ENCODE measurements at regions of chr6 and their contacts with region 1.

Region 1: DNA sequence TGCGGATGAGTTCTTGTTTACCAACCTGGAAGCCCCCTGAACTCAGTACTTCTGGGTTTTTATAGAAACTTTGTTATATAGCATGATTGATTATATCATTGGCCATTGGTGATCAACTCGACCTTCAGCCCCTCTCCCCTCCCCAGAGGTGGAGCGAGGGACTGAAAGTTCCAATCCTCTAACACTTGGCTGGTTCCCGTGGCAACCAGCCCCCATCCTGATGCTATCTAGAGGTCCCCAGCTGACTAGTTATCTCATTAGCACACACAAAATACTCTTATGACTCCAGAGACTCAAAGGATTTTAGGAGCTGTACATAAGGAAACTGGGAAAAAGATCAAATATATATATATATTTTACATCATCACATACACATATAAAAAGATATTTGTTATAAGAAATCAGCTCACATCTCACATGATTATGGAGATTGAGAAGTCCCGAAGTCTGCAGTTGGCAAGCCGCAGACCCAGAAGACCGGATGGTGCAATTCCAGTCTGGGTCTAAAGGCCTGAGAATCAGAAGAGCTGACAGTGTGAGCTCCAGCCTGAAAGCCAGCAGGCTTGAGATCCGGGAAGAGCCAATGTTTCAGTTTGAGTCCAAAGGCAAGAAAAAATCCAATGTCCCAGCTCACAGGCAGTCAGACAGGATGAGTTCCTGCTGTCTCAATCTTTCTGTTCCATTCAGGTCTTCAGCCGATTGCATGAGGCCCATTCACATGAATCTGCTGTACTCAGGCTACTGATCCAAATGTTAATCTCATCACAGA is 179.3 kb upstream of the DTNBP1 start:
- DNase-seq: no peak
- ATAC-seq: no peak
- H3K4me3 ChIP-seq: no peak overlapping the region
- H3K27ac ChIP-seq: no peak overlapping the region
- H3K4me1 ChIP-seq: peaks cover 5% of the 10 kb centered on the region; the same call in 1 of the 2 replicates
- H3K27me3 ChIP-seq: no peaks in the 10 kb centered on the region
- CTCF ChIP-seq: no peak
- EP300 ChIP-seq: no peak
- POLR2A ChIP-seq: no peak
- RAD21 ChIP-seq: no peak

Region 2: DNA sequence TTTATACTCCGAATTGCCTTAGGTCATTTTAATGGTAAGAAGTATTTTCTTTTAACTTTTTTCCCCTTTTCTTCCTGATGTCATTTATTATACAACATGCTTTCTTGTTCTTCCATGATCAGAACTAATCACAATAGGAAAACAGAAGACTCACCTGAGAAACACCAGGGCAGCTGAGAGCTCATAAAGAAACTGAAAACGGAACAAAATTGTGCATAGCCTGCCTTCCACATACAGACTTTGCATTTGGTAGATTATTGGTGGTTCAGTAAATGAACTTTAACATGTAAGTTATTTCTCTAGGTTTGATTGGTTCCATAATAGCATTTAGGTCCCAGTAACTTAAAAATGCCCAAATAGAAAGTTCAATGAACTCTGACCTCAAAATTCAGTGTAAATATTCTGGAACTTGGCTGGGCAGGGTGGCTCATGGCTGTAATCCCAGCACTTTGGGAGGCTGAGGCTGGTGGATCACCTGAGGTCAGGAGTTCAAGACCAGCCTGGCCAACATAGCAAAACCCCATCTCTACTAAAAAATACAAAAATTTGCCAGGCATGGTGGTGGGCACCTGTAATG is 18.2 kb before region 1 on chr6:
- CTCF ChIA-PET with region 1: interaction called, 3 read pairs
- POLR2A ChIA-PET with region 1: interaction called, 3 read pairs
- RAD21 ChIA-PET with region 1: interaction called, 5 read pairs
- SMC1A ChIA-PET with region 1: interaction called, 33 read pairs
- in situ Hi-C with region 1: no loop called
- intact Hi-C with region 1: no loop called
- DNase-seq: peak; percentile 40
- ATAC-seq: peak; percentile 90
- H3K4me3 ChIP-seq: no peak overlapping the region
- H3K27ac ChIP-seq: no peak overlapping the region
- H3K4me1 ChIP-seq: peaks cover 9% of the 10 kb centered on the region
- H3K27me3 ChIP-seq: no peaks in the 10 kb centered on the region
- CTCF ChIP-seq: no peak
- EP300 ChIP-seq: peak in 1 of 2 experiments; percentile 33; a peak in 1 of 4 replicates
- POLR2A ChIP-seq: no peak
- RAD21 ChIP-seq: no peak

Region 3: DNA sequence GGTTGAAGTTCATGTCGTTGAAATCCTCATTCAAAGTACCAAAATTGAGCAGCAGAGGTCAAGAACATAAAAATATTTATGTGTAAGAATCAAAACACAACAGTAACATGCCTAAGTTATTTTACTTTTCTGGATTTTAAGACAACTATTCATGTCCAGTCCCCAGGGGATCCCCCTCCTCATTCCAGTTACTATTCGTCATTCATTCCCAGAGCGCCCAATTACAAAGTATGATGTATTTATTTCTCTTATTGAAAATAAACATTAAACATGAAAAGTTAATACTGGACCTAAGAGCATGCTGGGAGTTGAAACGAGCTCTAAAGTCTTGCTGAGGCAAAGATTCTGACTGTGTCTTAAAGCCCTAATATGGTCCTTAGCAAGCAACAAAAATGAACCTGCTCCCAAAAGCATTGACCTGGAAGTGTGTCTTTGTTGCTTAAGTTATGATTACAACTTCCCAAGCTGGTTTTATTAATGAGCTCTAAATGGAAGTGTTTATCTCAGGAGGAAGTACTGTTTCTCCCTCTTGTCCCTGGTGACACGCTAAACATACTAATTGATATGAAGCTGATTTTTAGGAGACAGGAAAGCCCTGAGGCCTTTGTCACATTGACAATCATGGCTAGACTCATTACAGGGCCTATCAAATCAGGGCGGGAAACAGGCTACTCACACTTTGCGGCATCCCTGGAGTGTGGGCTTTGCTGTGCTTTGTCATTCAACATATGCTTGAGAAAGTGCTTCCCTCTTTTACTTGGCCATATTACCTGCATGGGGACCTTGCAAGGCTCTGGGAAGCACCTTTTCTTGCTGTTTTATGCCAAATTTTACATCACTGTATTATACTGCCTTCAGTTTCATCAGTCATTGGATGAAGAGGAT is 12.9 kb after region 1 on chr6:
- CTCF ChIA-PET with region 1: interaction called, 5 read pairs
- POLR2A ChIA-PET with region 1: interaction called, 5 read pairs
- RAD21 ChIA-PET with region 1: interaction called, 3 read pairs
- SMC1A ChIA-PET with region 1: interaction called, 11 read pairs
- in situ Hi-C with region 1: no loop called
- intact Hi-C with region 1: no loop called
- DNase-seq: no peak
- ATAC-seq: no peak
- H3K4me3 ChIP-seq: no peak overlapping the region
- H3K27ac ChIP-seq: no peak overlapping the region
- H3K4me1 ChIP-seq: no peaks in the 10 kb centered on the region
- H3K27me3 ChIP-seq: no peaks in the 10 kb centered on the region; a peak in 1 of 4 replicates
- CTCF ChIP-seq: no peak
- EP300 ChIP-seq: no peak
- POLR2A ChIP-seq: no peak
- RAD21 ChIP-seq: no peak

Region 4: GRCh38 chr6:15879382-15880261 is 37.5 kb after region 1 on chr6:
- CTCF ChIA-PET with region 1: interaction called, 4 read pairs
- POLR2A ChIA-PET with region 1: no interaction called
- RAD21 ChIA-PET with region 1: interaction called, 8 read pairs
- SMC1A ChIA-PET with region 1: interaction called, 13 read pairs
- in situ Hi-C with region 1: no loop called
- intact Hi-C with region 1: no loop called
- DNase-seq: no peak
- ATAC-seq: peak; percentile 81
- H3K4me3 ChIP-seq: no peak overlapping the region
- H3K27ac ChIP-seq: peak overlapping the region; percentile 61
- H3K4me1 ChIP-seq: peaks cover 18% of the 10 kb centered on the region
- H3K27me3 ChIP-seq: no peaks in the 10 kb centered on the region
- CTCF ChIP-seq: no peak
- EP300 ChIP-seq: 0 out of 4 replicates have a peak, but pooled peaks of 1 of the 2 experiments have one; percentile 25
- POLR2A ChIP-seq: no peak
- RAD21 ChIP-seq: no peak

Region 5: DNA sequence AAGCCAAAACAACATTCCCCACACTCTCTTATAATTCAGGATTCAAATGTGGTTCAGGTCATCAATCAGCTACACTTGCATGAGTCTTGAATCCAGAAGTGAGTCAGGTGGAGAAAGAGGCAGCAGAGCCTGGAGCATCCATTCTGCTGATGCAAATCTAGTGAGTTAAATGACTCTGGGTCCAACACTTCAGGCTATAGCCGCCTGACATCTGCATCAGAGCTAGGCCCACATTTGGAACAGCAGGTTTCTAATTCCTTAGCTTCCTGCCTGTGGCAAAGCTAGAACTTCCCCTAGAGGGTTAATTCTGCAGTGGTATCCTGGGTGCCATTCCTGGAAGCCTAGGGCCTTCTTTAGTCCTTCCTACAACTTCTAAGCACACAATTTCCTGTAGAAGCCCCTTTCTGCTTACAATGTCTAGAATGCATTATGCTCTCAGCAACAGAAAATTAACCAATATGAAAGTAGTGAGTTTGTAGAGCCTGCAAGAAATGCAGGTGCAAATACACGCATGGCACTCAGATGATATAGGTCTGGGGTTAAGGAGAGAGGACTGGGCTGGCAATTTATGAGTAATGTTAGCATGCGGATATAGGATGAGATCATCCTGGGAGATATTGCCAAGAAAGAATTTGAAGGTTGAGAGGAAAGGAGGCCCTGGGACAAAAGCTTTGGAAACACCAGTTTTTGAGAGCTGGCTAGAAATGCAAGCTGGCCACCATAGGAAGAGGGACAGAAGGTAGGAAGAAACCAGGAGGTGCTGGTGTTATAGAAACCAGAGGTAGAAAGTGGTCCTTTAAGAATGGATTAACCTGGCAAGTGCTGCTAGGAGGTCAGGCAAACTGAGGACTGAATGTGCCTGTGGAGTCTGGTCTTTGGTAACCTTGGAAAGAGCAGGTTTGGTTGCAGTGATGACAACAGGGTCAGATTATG is 103.4 kb after region 1 on chr6:
- CTCF ChIA-PET with region 1: no interaction called
- POLR2A ChIA-PET with region 1: no interaction called
- RAD21 ChIA-PET with region 1: no interaction called
- SMC1A ChIA-PET with region 1: no interaction called
- in situ Hi-C with region 1: no loop called
- intact Hi-C with region 1: no loop called
- DNase-seq: no peak
- ATAC-seq: no peak
- H3K4me3 ChIP-seq: no peak overlapping the region
- H3K27ac ChIP-seq: no peak overlapping the region
- H3K4me1 ChIP-seq: peaks cover 3% of the 10 kb centered on the region; the same call in 1 of the 2 replicates
- H3K27me3 ChIP-seq: no peaks in the 10 kb centered on the region
- CTCF ChIP-seq: no peak
- EP300 ChIP-seq: no peak
- POLR2A ChIP-seq: no peak
- RAD21 ChIP-seq: no peak

Region 6: GRCh38 chr6:16036725-16037124 is 194.6 kb after region 1 on chr6:
- CTCF ChIA-PET with region 1: no interaction called
- POLR2A ChIA-PET with region 1: no interaction called
- RAD21 ChIA-PET with region 1: no interaction called
- SMC1A ChIA-PET with region 1: interaction called, 10 read pairs
- in situ Hi-C with region 1: no loop called
- intact Hi-C with region 1: no loop called
- DNase-seq: no peak
- ATAC-seq: no peak
- H3K4me3 ChIP-seq: no peak overlapping the region
- H3K27ac ChIP-seq: no peak overlapping the region
- H3K4me1 ChIP-seq: peaks cover 3% of the 10 kb centered on the region; the same call in 1 of the 2 replicates
- H3K27me3 ChIP-seq: no peaks in the 10 kb centered on the region
- CTCF ChIP-seq: no peak
- EP300 ChIP-seq: no peak
- POLR2A ChIP-seq: no peak
- RAD21 ChIP-seq: no peak

Measured in GM12878 (cell line).